Activated CD4-positive, alpha-beta memory T cell treated with anti-CD3 and anti-CD28 coated beads for 36 hours (primary cell): ENCODE measurements at regions of chrX and their contacts with region 1.

Region 1: GRCh38 chrX:23782863-23783568 is at the start of gene SAT1:
- DNase-seq: peak; percentile 95
- H3K4me3 Mint-ChIP-seq: peak within 1 kb of the TSS; percentile 94
- H3K27ac Mint-ChIP-seq: peak within 1 kb of the TSS; percentile 96
- H3K4me1 Mint-ChIP-seq: peaks cover 28% of the 10 kb centered on the region
- H3K27me3 Mint-ChIP-seq: no peaks in the 10 kb centered on the region
- total RNA-seq, gene SAT1: 205 to 209 TPM

Region 2: DNA sequence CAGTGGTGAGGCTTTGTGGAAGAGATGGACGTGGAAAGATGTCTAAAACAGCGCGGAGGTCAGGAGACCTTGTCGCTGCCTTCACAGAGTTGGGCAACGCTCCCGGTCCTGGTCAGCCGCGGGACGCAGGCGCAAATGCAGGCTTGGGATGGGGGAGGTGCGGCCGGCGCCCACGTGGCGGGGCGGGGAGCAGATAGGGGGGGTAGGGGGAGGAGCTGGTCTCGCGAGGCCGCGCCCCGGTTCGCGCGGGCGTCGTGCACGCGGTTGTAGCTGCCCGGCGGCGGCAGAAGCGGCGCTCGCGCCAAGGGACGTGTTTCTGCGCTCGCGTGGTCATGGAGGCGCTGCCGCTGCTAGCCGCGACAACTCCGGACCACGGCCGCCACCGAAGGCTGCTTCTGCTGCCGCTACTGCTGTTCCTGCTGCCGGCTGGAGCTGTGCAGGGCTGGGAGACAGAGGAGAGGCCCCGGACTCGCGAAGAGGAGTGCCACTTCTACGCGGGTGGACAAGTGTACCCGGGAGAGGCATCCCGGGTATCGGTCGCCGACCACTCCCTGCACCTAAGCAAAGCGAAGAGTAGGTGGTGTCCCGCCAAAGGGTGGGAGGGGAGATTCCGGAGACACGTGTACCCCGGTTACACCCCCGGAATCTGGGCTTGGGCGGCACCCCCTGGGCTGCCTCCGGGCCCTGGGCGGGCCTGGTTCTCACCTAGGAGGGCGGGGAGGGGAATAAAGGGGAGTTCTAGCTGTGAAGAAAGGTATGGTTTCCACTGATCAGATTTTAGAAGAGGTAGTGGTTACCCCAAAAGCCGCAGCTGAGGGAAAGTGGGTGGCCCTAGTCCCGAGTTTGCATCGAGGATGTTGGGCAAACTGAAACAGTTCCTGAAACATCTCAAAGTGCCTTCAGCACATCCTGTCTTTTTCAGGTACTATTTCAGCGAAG is 115.5 kb before region 1 on chrX and contains the start of gene PRDX4:
- CTCF ChIA-PET with region 1: no interaction called
- POLR2A ChIA-PET with region 1: interaction called, 8 read pairs
- intact Hi-C with region 1: loop called (anchors 1 kb)
- DNase-seq: peak; percentile 87
- H3K4me3 Mint-ChIP-seq: peak within 1 kb of the TSS; percentile 80
- H3K27ac Mint-ChIP-seq: peak within 1 kb of the TSS; percentile 87
- H3K4me1 Mint-ChIP-seq: peaks cover 23% of the 10 kb centered on the region
- H3K27me3 Mint-ChIP-seq: no peaks in the 10 kb centered on the region
- total RNA-seq, gene PRDX4: 56.0 to 59.8 TPM

Region 3: GRCh38 chrX:23732704-23733103 is 50.3 kb before region 1 on chrX:
- CTCF ChIA-PET with region 1: no interaction called
- POLR2A ChIA-PET with region 1: interaction called, 3 read pairs
- intact Hi-C with region 1: loop called (anchors 1 kb)
- DNase-seq: no peak
- H3K4me3 Mint-ChIP-seq: peak overlapping the region; percentile 7
- H3K27ac Mint-ChIP-seq: peak overlapping the region; percentile 92
- H3K4me1 Mint-ChIP-seq: peaks cover 33% of the 10 kb centered on the region
- H3K27me3 Mint-ChIP-seq: no peaks in the 10 kb centered on the region

Region 4: DNA sequence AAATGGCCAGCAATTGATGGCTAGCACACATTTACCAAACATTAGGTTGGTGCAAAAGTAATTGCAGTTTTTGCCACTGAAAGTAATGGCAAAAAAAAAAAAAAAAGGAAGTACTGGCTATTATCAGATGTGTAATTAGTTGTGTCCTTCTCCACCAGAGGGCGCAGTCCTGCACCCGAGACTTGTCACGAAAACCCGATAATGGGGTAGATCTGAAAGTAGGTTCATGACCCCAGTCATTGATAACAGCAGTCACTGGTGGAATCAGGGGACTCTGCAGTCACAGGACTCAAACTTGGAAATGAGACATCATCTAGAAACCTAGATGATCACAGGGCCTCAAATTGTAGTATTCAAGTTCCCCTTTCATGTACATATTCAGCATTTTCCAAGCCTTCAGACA is 26.9 kb before region 1 on chrX:
- CTCF ChIA-PET with region 1: interaction called, 3 read pairs
- POLR2A ChIA-PET with region 1: interaction called, 6 read pairs
- intact Hi-C with region 1: loop called (anchors 1 kb)
- DNase-seq: peak; percentile 62
- H3K4me3 Mint-ChIP-seq: no peak overlapping the region
- H3K27ac Mint-ChIP-seq: peak overlapping the region; percentile 49
- H3K4me1 Mint-ChIP-seq: peaks cover 8% of the 10 kb centered on the region
- H3K27me3 Mint-ChIP-seq: no peaks in the 10 kb centered on the region

Region 5: DNA sequence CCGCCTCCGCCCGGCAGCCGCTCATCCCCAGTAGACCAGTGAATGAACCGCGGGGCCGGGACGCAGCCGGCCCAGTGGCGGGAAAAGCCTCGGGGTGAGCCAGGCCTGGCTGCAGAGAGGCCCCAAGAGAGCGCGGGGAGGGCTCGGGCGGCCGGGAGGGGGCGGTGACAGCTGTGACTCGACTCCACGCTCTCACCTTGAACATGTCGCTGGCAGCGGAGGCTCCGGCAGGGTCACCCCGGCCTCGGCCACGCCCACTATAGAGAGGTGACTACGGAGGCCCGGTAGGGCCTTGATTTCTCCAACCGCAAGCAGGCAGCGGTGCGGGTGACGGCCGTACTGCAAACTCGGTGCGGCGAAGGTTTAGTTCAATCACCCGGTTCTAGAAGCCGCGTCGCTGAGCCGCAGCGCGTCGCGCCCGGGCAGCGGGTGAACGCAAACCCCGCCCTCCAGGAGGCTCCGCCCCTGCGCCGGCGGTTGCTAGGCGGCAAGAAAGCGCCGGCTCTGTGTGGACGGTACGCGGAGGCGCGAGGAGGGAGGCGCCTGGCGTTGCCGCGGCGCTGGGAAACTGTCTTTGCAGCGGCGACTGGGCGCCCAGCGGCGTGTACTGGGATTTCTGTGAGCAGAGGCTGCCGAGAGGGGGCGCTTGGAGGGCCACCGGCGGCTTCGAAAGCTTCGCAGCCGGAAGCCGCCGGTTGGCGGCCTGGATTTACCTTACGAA is 124.6 kb after region 1 on chrX and contains the starts of genes APOO and CXorf58:
- CTCF ChIA-PET with region 1: interaction called, 49 read pairs
- POLR2A ChIA-PET with region 1: interaction called, 6 read pairs
- intact Hi-C with region 1: loop called (anchors 1 kb)
- DNase-seq: peak; percentile 94
- H3K4me3 Mint-ChIP-seq: peak within 1 kb of the TSS; percentile 74
- H3K27ac Mint-ChIP-seq: peak within 1 kb of the TSS; percentile 87
- H3K4me1 Mint-ChIP-seq: peaks cover 21% of the 10 kb centered on the region
- H3K27me3 Mint-ChIP-seq: no peaks in the 10 kb centered on the region
- total RNA-seq, gene APOO: 32.8 to 35.0 TPM
- total RNA-seq, gene CXorf58: 0.17 TPM in 1 of 2 experiments, not detected in the other